ENCODE measurements at regions of chr13 and their contacts with region 1.

Region 1: GRCh38 chr13:110138010-110138699 is 168.8 kb downstream of the COL4A1 start:
- DNase-seq: peak; percentile 89
- ATAC-seq: peak; percentile 79
- H3K4me3 Mint-ChIP-seq: peak overlapping the region; percentile 68
- H3K27ac Mint-ChIP-seq: peak overlapping the region; percentile 59
- H3K4me1 Mint-ChIP-seq: peaks cover 10% of the 10 kb centered on the region
- H3K27me3 Mint-ChIP-seq: peaks cover 44% of the 10 kb centered on the region

Region 2: DNA sequence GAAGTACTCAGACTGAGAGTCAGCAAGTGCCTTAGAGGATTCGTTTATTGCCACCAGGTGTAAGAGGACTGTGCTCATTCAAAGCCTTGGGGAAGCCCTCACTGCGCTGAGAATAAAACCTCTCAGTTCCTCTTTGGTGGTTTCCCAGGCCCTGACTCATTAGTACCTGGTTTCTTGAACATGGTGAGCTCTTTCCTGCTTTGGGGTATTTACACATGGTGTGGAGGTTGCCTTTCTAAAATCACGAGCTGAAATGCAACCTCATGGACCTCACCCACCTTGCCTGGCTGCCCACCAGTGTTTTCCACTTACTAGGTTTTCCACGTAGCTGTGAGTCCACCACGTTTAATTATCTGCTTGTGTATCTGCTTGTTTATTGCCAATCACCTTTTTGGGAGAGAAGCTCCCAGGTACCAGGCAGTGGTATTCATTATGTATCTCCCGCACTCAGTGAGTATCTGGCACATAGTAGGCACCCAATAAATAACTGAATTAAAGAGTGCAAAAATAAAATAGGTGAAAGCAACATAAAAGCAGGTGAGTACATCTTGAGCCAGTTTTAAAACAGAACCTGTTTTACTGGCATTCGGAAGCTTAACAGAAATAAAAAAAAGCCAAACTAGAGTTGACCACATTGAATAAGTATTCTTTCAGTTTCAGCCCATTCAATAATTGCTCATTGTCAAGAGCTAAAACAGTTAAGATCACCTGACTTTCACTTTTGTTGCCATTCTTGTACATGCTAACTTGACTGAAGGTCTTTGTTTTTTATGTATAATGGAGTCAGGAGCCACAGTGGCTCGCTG is 975.7 kb before region 1 on chr13:
- CTCF ChIA-PET with region 1: no interaction called
- POLR2A ChIA-PET with region 1: no interaction called
- intact Hi-C with region 1: loop called in 1 of 2 experiments (anchors 5 kb)
- DNase-seq: peak; percentile 74
- ATAC-seq: peak; percentile 98
- H3K4me3 Mint-ChIP-seq: no peak overlapping the region
- H3K27ac Mint-ChIP-seq: no peak overlapping the region
- H3K4me1 Mint-ChIP-seq: peaks cover 8% of the 10 kb centered on the region
- H3K27me3 Mint-ChIP-seq: peaks cover 19% of the 10 kb centered on the region

Region 3: GRCh38 chr13:109840201-109840892 is 297.8 kb before region 1 on chr13:
- CTCF ChIA-PET with region 1: no interaction called
- POLR2A ChIA-PET with region 1: no interaction called
- intact Hi-C with region 1: loop called in 1 of 2 experiments (anchors 5 kb)
- DNase-seq: peak; percentile 52
- ATAC-seq: peak; percentile 99
- H3K4me3 Mint-ChIP-seq: no peak overlapping the region
- H3K27ac Mint-ChIP-seq: no peak overlapping the region
- H3K4me1 Mint-ChIP-seq: peaks cover 11% of the 10 kb centered on the region
- H3K27me3 Mint-ChIP-seq: peaks cover 19% of the 10 kb centered on the region

Region 4: DNA sequence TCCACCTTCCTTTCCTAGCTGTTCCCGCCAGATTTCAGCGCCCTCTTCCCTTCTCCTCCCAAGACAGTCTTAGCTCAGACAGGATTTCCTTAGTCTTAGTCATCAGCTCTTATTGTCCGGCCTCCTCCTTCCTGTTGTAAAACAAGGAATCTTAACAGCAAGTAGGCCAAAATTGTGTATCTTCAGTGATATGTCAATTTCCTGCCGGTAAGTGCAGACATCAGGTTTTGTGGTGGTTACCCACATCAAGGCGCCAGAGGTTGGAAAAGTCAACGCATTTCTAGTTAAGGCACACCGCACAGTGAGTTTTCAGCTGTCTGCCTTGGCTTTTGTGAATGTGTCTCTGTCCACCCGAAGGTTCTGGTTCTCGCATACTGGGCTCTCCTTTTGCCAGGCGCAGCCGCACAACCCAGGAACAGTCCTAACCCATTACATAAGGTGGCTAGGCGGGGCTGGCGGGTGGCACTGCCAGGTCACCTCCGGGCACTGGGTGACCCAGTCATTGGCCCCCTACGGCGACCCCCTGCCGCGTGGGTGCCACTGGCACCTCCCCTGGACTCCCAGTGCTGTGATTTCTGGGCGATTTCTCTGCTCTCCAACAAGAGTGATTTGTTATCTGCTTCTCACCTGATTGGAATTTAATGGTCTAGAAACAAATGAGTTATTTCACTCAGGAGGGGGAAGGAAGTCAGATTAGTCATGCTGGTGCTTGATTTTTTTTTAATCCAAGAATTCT is 181.8 kb after region 1 on chr13:
- CTCF ChIA-PET with region 1: no interaction called
- POLR2A ChIA-PET with region 1: no interaction called
- intact Hi-C with region 1: loop called in 1 of 2 experiments (anchors 1 kb)
- DNase-seq: peak; percentile 83
- ATAC-seq: peak; percentile 79
- H3K4me3 Mint-ChIP-seq: no peak overlapping the region
- H3K27ac Mint-ChIP-seq: no peak overlapping the region
- H3K4me1 Mint-ChIP-seq: peaks cover 14% of the 10 kb centered on the region
- H3K27me3 Mint-ChIP-seq: peaks cover 38% of the 10 kb centered on the region

Region 5: DNA sequence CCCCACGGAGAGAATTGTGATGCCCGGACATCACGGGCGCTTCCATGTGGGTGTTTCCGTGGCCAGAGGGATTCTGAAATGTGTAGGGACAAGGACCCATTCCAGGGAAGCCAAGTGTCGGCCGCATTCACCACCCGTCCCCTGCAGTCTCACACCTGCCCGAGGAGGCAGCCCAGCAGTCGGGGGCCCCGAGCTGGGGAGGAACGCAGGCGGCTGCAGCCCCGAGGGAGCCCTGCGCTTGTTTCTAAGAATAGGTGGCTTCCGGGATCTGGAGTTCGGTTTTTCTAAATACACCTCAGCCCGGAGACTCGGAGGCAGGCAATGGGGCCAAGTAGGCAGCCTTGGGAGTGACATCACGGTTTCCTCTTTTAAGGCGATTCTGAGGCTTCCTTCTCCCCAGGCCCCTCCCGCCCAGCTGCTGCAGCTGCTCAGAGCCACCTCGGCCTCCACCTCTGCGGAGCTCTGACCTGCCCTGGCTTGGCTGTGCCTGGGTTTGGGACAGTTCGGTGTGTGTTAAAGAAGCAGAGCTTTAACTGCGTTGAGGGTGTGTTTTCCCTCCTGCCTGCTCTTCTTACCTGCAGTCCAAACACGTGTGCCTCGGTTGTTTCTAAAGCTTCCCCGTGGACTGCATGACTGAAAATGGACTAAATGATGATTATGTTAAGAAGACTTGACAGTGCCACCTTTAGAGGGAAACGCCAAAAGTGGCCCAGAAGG is 249.4 kb after region 1 on chr13:
- CTCF ChIA-PET with region 1: no interaction called
- POLR2A ChIA-PET with region 1: no interaction called
- intact Hi-C with region 1: loop called in 1 of 2 experiments (anchors 10 kb)
- DNase-seq: peak; percentile 46
- ATAC-seq: peak; percentile 76
- H3K4me3 Mint-ChIP-seq: no peak overlapping the region
- H3K27ac Mint-ChIP-seq: no peak overlapping the region
- H3K4me1 Mint-ChIP-seq: peaks cover 8% of the 10 kb centered on the region
- H3K27me3 Mint-ChIP-seq: peaks cover 35% of the 10 kb centered on the region

Region 6: DNA sequence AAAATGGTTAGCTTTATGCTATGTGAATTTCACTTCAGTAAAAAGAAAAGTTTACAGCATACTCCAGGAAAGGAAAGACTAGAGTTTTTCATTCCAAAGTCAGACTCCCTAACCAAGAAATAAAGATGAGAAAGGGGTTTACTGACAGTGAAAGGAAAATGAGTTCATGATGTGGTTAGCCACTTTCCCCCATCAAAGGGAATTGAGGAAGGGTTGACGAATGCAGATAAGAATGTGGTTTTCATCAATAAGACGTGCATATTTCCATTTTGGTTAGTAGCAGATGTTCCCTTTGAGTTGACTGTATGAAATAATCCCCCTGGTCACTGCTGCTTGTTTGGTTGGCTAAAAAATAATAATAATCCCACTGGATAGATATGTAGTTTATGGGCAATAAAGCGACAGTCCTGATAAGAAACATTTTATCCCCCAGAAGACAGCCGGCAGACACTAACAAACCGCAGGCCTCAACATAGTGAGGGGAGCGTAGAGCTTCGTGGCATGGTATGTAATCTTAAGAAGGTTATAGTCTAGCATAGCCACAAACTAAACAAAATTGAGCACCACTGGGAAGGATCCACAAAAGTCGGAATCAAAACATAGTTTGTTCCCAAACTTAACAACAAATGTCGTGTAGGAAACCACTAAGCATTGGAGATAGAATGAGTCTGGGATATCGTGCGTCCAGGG is 283.7 kb after region 1 on chr13:
- CTCF ChIA-PET with region 1: no interaction called
- POLR2A ChIA-PET with region 1: no interaction called
- intact Hi-C with region 1: loop called in 1 of 2 experiments (anchors 5 kb)
- DNase-seq: peak; percentile 31
- ATAC-seq: peak; percentile 79
- H3K4me3 Mint-ChIP-seq: no peak overlapping the region
- H3K27ac Mint-ChIP-seq: no peak overlapping the region
- H3K4me1 Mint-ChIP-seq: peaks cover 21% of the 10 kb centered on the region
- H3K27me3 Mint-ChIP-seq: peaks cover 84% of the 10 kb centered on the region

Measured in activated CD4-positive, alpha-beta T cell treated with anti-CD3 and anti-CD28 coated beads for 36 hours (primary cell).